Naive thymus-derived CD4-positive, alpha-beta T cell (primary cell): ENCODE measurements at regions of chr10 and their contacts with region 1.

Region 1: GRCh38 chr10:22573820-22574569 is 140.4 kb downstream of the PIP4K2A start:
- DNase-seq: peak in 5 of 9 donors; percentile 16 to 26 (median 24)
- ATAC-seq: peak; percentile 67
- H3K4me3 ChIP-seq: no peak overlapping the region
- H3K4me3 Mint-ChIP-seq: peak overlapping the region in 2 of 10 donors; percentile 24 to 66
- H3K27ac ChIP-seq: no peak overlapping the region
- H3K27ac Mint-ChIP-seq: peak overlapping the region; percentile 8 to 91 (median 62)
- H3K4me1 ChIP-seq: peaks cover 0 to 33% of the 10 kb centered on the region in 2 donors
- H3K4me1 Mint-ChIP-seq: peaks cover 32 to 80% (median 62%) of the 10 kb centered on the region in 7 donors
- H3K27me3 ChIP-seq: no peaks in the 10 kb centered on the region
- H3K27me3 Mint-ChIP-seq: no peaks in the 10 kb centered on the region

Region 2: DNA sequence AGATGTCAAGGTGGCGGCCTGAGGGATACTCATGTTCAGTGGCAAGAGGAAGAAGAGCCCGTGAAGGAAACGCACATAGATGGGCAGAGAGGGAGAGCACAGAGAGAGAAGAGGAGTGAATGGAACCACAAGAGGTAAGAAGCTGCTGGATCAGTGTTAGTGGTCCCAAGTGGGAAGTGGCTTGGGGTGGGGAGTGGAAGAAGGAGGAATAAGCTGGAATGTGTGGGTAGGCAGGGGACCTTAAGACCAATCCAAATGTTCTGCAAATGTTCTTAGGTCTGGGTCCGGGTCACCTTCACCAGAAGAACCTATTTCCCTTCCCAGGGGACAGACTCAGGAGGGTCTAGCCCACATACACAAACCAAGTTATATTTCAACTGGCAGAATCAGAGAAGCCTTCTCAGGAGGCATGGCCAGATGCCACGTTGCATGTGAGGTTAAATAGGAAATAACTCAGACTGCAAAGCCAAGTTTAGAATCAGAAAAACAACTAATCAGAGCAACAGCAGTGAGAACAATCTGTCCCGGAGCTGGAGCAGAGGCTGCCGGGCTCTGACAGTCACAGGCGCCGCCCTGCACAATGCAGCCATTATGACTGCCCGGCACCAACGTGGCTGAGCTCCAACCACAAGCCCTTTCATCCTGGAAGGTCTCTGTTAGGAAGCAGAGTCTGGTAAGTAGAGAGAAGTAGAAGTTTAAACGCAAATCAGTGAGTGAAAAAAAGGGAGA is 275.2 kb after region 1 on chr10:
- CTCF ChIA-PET with region 1: interaction called, 3 read pairs
- POLR2A ChIA-PET with region 1: no interaction called
- intact Hi-C with region 1: loop called in 1 of 2 experiments (anchors 1 kb)
- DNase-seq: peak in 5 of 9 donors; percentile 8 to 26 (median 15)
- ATAC-seq: no peak
- H3K4me3 ChIP-seq: no peak overlapping the region
- H3K4me3 Mint-ChIP-seq: peak overlapping the region in 9 of 10 donors; percentile 46 to 79 (median 71)
- H3K27ac ChIP-seq: no peak overlapping the region
- H3K27ac Mint-ChIP-seq: peak overlapping the region in 7 of 9 donors; percentile 11 to 82 (median 58)
- H3K4me1 ChIP-seq: peaks cover 0 to 7% of the 10 kb centered on the region in 2 donors
- H3K4me1 Mint-ChIP-seq: peaks cover 2 to 17% (median 13%) of the 10 kb centered on the region in 7 donors
- H3K27me3 ChIP-seq: no peaks in the 10 kb centered on the region
- H3K27me3 Mint-ChIP-seq: peaks cover 0 to 6% (median 0%) of the 10 kb centered on the region in 5 donors